ENCODE measurements at regions of chr10 and their contacts with region 1.

Region 1: DNA sequence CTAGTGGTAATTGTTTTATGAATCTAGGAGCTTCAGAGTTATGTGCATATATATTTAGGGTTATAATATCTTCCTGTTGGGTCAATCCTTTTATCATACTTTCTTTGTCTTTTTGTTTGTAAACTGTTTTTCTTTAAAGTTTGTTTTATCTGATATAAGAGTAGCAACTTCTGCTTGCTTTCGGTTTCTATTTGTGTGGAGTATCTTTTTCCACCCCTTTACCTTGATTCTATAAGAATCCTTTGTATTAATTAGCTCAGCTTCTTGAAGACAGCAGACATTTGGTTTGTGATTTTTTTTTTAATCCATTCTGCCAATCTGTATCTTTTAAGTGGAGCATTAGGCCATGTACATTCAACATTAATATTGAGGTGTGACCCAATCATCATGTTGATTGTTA is 9.3 kb downstream of the CASP7 start:
- DNase-seq: no peak
- ATAC-seq: no peak
- H3K4me3 ChIP-seq: no peak overlapping the region
- H3K27ac ChIP-seq: no peak overlapping the region
- H3K4me1 ChIP-seq: no peaks in the 10 kb centered on the region
- CTCF ChIP-seq: no peak
- EP300 ChIP-seq: no peak
- POLR2A ChIP-seq: no peak
- RAD21 ChIP-seq: no peak

Region 2: GRCh38 chr10:113678690-113679462 is 10.2 kb before region 1 on chr10:
- CTCF ChIA-PET with region 1: interaction called, 11 read pairs
- POLR2A ChIA-PET with region 1: no interaction called
- DNase-seq: peak; percentile 84 to 93
- ATAC-seq: peak; percentile 86 to 88
- H3K4me3 ChIP-seq: peak overlapping the region; percentile 97
- H3K27ac ChIP-seq: peak overlapping the region; percentile 96 to 100
- H3K4me1 ChIP-seq: peaks cover 11% of the 10 kb centered on the region
- CTCF ChIP-seq: peak; percentile 50
- EP300 ChIP-seq: no peak
- POLR2A ChIP-seq: peak; percentile 61
- RAD21 ChIP-seq: peak; percentile 34 to 48

Region 3: GRCh38 chr10:113704637-113705343 is 15.7 kb after region 1 on chr10:
- CTCF ChIA-PET with region 1: interaction called, 38 read pairs
- POLR2A ChIA-PET with region 1: no interaction called
- DNase-seq: peak; percentile 20 to 49
- ATAC-seq: peak; percentile 61 to 89; a peak in 4 of 6 replicates
- H3K4me3 ChIP-seq: no peak overlapping the region
- H3K27ac ChIP-seq: no peak overlapping the region
- H3K4me1 ChIP-seq: peaks cover 25% of the 10 kb centered on the region
- CTCF ChIP-seq: peak; percentile 87
- EP300 ChIP-seq: no peak
- POLR2A ChIP-seq: no peak
- RAD21 ChIP-seq: peak; percentile 80 to 82

Measured in A549 (cell line).